HEK293T (cell line): ENCODE measurements at regions of chr17 and their contacts with region 1.

Region 1: GRCh38 chr17:48084932-48085444 is 16.3 kb downstream of the CBX1 start:
- DNase-seq: no peak

Region 2: GRCh38 chr17:47987240-47987835 is 97.7 kb before region 1 on chr17:
- CTCF ChIA-PET with region 1: no interaction called
- POLR2A ChIA-PET with region 1: no interaction called
- DNase-seq: no peak

Region 3: DNA sequence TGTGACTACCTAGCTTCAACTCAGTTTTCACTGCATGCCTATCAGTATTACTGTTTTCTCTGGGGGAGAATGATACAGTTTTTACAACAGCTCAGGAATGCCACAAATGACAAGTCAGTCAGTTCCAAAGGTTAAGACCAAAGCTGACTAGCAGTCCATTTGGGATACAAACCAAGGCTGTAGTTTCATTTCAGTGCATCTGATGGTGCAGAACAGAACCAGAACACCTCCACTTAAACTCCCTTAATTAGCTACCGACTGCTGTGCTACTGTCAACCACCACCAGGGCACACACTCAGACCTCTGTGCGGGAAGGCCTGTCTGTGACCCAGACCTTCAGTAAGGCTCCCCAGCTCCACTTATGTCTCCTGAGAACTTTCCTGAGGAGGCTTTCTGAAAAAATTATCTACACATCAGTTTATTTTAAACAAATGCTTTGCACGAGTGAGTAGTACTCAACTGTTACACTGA is 16.5 kb before region 1 on chr17:
- CTCF ChIA-PET with region 1: interaction called, 15 read pairs
- POLR2A ChIA-PET with region 1: no interaction called
- DNase-seq: peak; percentile 58

Region 4: GRCh38 chr17:48101012-48101720 is 16.2 kb after region 1 on chr17 and contains the start of gene CBX1:
- CTCF ChIA-PET with region 1: interaction called, 7 read pairs
- POLR2A ChIA-PET with region 1: interaction called, 19 read pairs
- DNase-seq: peak; percentile 95

Region 5: DNA sequence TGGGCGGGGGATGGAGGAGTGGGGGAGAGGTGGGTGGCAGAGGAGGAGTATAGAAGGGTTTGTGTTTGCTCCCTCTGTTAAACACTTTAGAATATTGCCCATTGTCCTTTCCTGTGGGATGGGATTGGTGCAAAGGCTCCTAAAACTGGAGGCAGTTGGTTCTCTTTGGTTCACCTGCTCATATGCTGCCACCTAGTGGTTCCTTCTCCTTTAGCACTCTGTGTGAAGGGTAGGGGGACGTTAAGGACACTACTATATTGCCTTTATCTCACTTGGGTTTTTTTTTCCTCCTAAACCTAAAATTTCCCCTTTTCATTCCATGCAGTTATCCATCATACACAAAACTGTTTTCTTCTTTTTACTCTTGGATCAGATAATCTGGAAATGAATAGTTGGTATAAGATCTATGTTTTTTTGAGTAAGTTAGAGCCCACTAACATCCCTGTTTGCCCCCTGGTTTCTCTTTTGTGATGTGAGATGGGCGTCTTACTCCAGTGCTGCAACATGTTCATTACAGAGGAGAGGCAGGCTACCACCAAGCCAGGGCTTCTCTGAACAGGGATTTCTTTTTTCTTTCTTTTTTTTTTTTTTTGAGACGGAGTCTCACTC is 46.3 kb after region 1 on chr17:
- CTCF ChIA-PET with region 1: interaction called, 11 read pairs
- POLR2A ChIA-PET with region 1: no interaction called
- DNase-seq: peak; percentile 82